Activated T-helper 2 cell treated with anti-CD3 and anti-CD28 coated beads, Interferon-gamma antibody, Interleukin-2, Interleukin-4, amounts not matched to agents 10 μg/mL and 5 μg/mL and 100 μg/mL, durations not matched to agents 14 hours and 24 hours and 36 hours (primary cell): ENCODE measurements at regions of chr3 and their contacts with region 1.

Region 1: GRCh38 chr3:142226484-142226883 is 1.1 kb upstream of the GK5 start:
- DNase-seq: no peak
- H3K4me3 Mint-ChIP-seq: peak overlapping the region; percentile 68
- H3K27ac Mint-ChIP-seq: no peak overlapping the region
- H3K4me1 Mint-ChIP-seq: peaks cover 18% of the 10 kb centered on the region
- H3K27me3 Mint-ChIP-seq: no peaks in the 10 kb centered on the region

Region 2: DNA sequence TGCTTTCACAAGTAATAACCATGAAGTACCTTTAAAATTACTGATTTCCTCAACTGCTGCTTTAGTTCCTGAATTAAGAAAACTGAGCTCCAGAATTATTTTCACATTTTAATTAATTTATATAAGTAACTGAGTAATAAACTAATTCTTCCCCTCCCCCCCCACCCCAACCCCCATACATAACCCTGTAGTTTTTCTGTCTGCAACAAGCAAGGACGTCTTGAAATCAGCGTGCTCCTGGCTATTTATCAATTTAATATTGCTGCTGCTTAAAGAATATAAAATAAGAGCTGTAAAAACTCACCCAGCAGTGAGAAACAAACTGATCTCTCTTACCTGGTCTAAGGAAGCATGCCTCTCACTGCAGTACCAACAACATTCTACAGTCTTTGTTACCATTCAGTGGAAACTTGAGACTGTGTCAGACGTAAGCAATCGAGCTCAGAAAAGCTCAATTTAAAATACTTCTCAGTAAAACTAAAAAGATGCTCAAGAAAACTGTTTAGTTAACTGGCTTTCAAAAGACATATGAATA is 198.2 kb before region 1 on chr3:
- intact Hi-C with region 1: loop called (anchors 5 kb)
- DNase-seq: peak; percentile 26
- H3K4me3 Mint-ChIP-seq: peak overlapping the region; percentile 90
- H3K27ac Mint-ChIP-seq: peak overlapping the region; percentile 86
- H3K4me1 Mint-ChIP-seq: peaks cover 31% of the 10 kb centered on the region
- H3K27me3 Mint-ChIP-seq: no peaks in the 10 kb centered on the region

Region 3: DNA sequence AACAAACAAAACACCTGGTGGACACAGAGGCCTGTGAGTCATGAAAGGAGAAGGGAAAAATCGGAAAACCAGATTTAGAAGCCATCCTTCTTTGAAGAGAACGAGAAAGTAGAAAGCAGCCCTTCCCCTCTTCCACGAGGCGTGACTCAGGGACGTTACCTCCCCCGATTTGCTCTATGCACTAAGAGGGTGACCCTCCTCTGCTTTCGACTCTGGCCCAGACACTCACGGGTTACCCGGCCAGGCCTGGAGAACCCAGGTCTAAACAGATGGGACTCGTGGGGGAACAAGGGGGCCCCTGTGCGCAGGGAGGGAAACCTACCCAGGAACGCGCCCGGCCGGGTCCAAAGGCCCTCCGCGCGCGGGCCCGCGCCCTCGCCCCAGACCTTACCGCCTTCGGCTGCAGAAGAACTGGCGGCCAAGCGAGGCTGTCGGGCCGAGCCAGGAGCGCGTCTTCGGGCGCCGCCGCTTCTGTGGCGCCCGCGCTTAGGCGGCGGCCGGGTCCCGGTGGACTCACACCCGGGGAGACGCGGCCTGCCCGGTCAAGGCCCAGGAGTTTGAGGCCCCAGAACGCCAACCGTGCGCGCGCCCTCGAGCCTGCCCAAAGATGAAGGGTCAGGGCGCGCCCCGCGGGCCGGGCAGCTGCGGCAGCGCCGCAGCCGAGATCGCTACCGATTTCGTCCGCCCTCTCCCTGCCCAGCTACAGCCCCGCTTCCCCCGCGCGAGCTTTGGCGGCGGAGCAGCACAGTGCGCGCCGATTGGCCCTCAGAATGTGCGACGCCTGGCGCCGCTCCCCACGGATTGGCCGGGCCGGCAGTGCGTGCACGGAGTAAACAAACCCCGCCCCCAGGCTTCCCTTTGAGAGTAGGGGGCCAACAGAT is 77.5 kb before region 1 on chr3 and contains the start of gene TFDP2:
- intact Hi-C with region 1: loop called (anchors 2 kb)
- DNase-seq: peak; percentile 86
- H3K4me3 Mint-ChIP-seq: peak within 1 kb of the TSS; percentile 84
- H3K27ac Mint-ChIP-seq: peak within 1 kb of the TSS; percentile 64
- H3K4me1 Mint-ChIP-seq: peaks cover 30% of the 10 kb centered on the region
- H3K27me3 Mint-ChIP-seq: peaks cover 3% of the 10 kb centered on the region
- total RNA-seq, gene TFDP2: 36.7 and 37.2 TPM in 2 replicates

Region 4: DNA sequence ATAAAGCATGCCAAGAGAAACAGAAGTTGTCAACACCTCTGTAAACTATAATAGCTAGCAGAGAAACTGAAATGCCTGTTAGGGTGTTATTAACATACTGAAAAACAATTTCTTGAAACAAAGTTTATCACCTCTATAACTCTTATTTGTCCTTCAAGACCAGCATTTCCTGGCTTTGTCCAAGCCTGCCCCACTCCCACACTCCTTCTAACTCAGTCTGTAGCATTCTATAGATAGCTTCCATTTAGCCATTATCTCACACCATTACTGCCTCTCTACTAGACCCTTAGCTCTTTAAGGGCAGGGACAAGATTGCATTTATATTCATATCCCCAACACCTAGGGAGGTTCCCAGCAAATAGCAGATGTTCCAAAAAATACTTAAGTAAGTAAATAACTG is 37.6 kb before region 1 on chr3:
- intact Hi-C with region 1: no loop called
- DNase-seq: no peak
- H3K4me3 Mint-ChIP-seq: no peak overlapping the region
- H3K27ac Mint-ChIP-seq: no peak overlapping the region
- H3K4me1 Mint-ChIP-seq: no peaks in the 10 kb centered on the region
- H3K27me3 Mint-ChIP-seq: no peaks in the 10 kb centered on the region

Region 5: DNA sequence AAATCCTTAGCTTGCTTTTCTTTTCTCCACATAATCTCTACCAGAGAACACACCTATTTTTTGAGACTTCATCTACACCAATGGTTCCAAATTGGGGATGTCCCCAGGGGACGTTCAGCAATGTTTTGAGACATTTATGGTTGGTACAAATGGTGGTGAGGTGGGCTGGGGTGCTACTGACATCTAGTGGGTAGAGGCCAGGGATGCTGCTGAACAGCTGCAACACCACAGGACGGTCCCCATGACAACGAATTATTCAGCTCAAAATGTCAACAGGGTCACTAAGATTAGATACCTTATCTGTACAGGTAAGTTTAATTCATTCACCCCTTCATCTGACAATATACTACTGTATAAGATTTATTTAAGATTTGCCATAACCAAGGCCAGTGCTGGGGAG is 15.4 kb before region 1 on chr3:
- intact Hi-C with region 1: no loop called
- DNase-seq: no peak
- H3K4me3 Mint-ChIP-seq: no peak overlapping the region
- H3K27ac Mint-ChIP-seq: peak overlapping the region; percentile 9
- H3K4me1 Mint-ChIP-seq: peaks cover 8% of the 10 kb centered on the region
- H3K27me3 Mint-ChIP-seq: no peaks in the 10 kb centered on the region

Region 6: GRCh38 chr3:142269767-142270166 is 43.3 kb after region 1 on chr3:
- intact Hi-C with region 1: loop called (anchors 5 kb)
- DNase-seq: no peak
- H3K4me3 Mint-ChIP-seq: no peak overlapping the region
- H3K27ac Mint-ChIP-seq: peak overlapping the region; percentile 73
- H3K4me1 Mint-ChIP-seq: peaks cover 27% of the 10 kb centered on the region
- H3K27me3 Mint-ChIP-seq: no peaks in the 10 kb centered on the region

Region 7: DNA sequence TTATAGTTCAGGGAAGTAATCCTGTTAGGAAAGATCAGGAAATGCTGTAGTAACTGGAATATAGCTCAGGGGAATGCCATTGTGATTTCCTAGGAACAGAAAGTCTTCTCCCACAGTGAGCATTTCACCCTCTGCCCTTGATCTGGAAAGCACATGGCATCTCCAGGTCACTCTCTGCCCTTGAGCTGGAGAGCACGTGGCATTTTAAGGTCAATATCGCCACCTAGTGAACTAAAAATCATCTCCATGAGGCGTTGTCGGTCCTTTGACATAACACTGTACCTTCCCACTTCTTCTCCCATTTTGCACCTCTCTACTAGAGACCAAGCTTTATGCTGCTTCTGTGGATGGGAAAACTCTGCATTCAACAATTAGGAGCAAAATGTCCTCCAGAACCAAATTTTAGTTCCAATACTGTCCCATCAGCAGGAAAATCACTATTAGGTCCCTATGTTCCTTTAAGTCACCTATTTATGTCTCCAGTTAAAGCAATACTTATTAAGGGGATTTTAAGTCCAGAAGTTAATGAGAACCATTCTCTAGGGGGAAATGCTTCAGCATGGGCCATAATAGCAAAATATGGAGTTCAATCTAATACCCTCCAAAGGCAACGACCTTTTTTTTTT is 53.6 kb after region 1 on chr3:
- intact Hi-C with region 1: no loop called
- DNase-seq: peak; percentile 26
- H3K4me3 Mint-ChIP-seq: no peak overlapping the region
- H3K27ac Mint-ChIP-seq: peak overlapping the region; percentile 24
- H3K4me1 Mint-ChIP-seq: peaks cover 28% of the 10 kb centered on the region
- H3K27me3 Mint-ChIP-seq: no peaks in the 10 kb centered on the region

Region 8: GRCh38 chr3:142501004-142501926 is 274.8 kb after region 1 on chr3:
- intact Hi-C with region 1: no loop called
- DNase-seq: no peak
- H3K4me3 Mint-ChIP-seq: no peak overlapping the region
- H3K27ac Mint-ChIP-seq: peak overlapping the region; percentile 70
- H3K4me1 Mint-ChIP-seq: peaks cover 28% of the 10 kb centered on the region
- H3K27me3 Mint-ChIP-seq: no peaks in the 10 kb centered on the region